ENCODE measurements at regions of chr10 and their contacts with region 1.

Region 1: DNA sequence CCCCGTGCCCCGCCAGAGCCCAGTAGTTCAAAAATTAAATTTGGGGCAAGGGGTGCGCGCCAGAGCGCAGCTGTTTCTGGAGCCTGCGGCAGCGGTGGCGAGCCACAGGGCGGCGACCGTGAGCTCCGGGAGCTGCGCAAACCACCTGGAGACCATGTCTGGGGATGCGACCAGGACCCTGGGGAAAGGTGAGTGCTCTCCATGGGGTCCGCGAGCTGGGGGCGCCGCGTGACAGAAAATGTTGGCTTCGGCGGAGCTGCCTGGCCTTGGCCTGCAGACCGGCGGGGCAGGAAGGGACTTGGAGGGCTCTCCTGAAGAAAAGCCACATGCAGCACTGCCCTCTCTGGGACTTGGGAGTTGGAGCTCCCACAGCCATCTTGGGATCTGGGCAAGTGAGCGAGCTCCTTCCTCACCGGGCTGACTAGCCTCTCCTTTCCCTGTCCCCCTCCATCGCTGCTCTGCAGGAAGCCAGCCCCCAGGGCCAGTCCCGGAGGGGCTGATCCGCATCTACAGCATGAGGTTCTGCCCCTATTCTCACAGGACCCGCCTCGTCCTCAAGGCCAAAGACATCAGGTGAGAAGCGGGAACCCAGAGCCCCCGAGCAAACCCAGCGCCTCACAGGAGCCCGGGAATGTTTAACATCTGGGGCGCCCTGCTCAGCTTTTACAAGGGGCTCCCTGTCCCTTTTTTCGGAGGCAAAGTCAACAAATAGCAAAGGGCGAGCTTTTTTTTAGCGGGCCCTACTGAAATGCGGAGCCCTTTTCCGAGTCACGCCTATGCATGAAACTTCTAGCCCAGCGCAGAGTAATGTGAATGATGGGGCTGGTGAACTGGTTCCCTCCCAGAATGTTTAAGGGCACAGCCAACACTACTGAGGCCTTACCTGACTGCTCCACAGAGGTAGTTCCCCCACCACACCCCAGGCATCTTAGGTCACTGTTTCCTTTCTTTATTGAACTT is 6.1 kb downstream of the GSTO2 start:
- DNase-seq: peak; percentile 62
- H3K4me3 Mint-ChIP-seq: no peak overlapping the region
- H3K27ac Mint-ChIP-seq: no peak overlapping the region
- H3K4me1 Mint-ChIP-seq: peaks cover 6% of the 10 kb centered on the region
- H3K27me3 Mint-ChIP-seq: peaks cover 33% of the 10 kb centered on the region

Region 2: GRCh38 chr10:104067525-104067924 is 207.5 kb before region 1 on chr10:
- CTCF ChIA-PET with region 1: no interaction called
- DNase-seq: no peak
- H3K4me3 Mint-ChIP-seq: no peak overlapping the region
- H3K27ac Mint-ChIP-seq: no peak overlapping the region
- H3K4me1 Mint-ChIP-seq: no peaks in the 10 kb centered on the region
- H3K27me3 Mint-ChIP-seq: peaks cover 30% of the 10 kb centered on the region

Region 3: DNA sequence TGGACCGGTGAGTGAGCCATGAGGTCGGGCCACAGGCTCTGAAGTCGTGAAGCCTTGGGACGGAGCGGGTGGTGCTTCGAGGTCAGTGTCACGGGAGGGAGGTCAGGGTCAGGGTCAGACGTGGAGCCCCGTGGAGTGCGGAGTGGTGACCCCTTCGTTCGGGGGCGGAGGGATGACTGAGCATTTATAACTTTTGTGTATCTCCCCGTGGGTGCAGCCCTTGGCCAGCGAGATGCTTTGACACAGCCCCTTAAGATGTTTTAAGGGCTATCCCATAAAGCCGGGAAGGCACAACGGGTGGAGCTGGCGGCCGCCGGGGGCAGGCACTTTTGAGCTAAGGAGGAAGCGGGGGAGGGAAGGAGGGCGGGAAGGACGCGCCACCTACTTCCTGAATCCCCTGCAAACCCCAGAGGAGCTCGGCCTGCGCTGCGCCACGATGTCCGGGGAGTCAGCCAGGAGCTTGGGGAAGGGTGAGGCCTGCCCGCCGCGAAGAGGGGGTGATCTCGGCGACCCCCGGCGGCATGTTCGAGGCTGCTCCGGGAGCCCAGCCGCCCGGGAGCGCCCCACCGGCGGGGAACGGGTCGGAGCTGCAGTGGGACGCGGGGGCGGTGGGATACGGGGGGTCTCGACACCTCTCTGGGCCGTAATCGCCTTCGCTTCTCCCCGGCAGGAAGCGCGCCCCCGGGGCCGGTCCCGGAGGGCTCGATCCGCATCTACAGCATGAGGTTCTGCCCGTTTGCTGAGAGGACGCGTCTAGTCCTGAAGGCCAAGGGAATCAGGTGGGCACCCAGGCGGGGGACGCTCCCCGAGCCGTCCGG is 20.3 kb before region 1 on chr10 and contains the start of gene GSTO1:
- CTCF ChIA-PET with region 1: interaction called, 17 read pairs
- DNase-seq: peak; percentile 76
- H3K4me3 Mint-ChIP-seq: peak within 1 kb of the TSS; percentile 92
- H3K27ac Mint-ChIP-seq: peak within 1 kb of the TSS; percentile 93
- H3K4me1 Mint-ChIP-seq: peaks cover 52% of the 10 kb centered on the region
- H3K27me3 Mint-ChIP-seq: peaks cover 16% of the 10 kb centered on the region

Region 4: GRCh38 chr10:104291439-104291951 is 16.5 kb after region 1 on chr10:
- CTCF ChIA-PET with region 1: interaction called, 66 read pairs
- DNase-seq: peak; percentile 91
- H3K4me3 Mint-ChIP-seq: no peak overlapping the region
- H3K27ac Mint-ChIP-seq: no peak overlapping the region
- H3K4me1 Mint-ChIP-seq: peaks cover 14% of the 10 kb centered on the region
- H3K27me3 Mint-ChIP-seq: peaks cover 35% of the 10 kb centered on the region

Region 5: DNA sequence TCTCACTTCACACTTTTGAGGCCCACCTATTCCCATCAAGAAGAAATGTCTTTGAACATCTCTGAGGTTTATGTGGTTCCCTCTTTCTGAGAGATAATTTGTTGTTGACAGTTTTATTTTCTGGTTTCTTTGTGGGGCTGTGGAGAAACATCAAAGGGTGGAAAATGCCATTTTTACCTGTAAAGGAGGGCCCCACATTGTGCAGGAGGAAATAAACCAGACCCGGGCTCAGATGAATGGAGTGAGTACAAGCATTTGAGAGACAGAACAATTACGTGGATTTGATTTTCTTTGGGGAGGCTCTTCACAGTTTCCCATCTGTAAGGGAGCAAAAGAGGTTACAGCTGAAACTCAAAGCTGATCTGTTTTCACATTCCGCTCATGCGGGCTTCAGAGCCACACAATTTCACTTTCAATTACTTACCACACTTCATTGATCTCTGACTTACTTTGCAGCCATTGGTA is 33.4 kb after region 1 on chr10:
- CTCF ChIA-PET with region 1: interaction called, 21 read pairs
- DNase-seq: peak; percentile 61
- H3K4me3 Mint-ChIP-seq: peak overlapping the region; percentile 22
- H3K27ac Mint-ChIP-seq: peak overlapping the region; percentile 92
- H3K4me1 Mint-ChIP-seq: peaks cover 80% of the 10 kb centered on the region
- H3K27me3 Mint-ChIP-seq: peaks cover 5% of the 10 kb centered on the region

Region 6: DNA sequence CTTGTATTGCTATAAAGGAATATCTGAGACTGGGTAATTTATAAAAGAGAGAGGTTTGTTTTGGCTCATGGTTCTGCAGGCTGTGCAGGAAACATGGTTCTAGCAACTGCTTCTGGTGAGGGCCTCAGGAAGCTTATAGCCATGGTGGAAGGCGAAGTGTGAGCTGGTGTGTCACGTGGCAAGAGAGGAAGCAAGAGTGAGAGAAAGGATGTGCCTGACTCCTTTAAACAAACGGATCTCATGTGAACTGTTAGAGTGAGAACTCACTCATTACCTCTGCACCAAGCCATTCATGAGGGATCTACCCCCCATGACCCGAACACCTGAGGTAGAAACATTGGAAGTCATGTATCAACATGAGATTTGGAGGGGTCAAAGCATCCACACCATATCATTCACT is 70.9 kb after region 1 on chr10:
- CTCF ChIA-PET with region 1: interaction called, 66 read pairs
- DNase-seq: no peak
- H3K4me3 Mint-ChIP-seq: no peak overlapping the region
- H3K27ac Mint-ChIP-seq: peak overlapping the region; percentile 0
- H3K4me1 Mint-ChIP-seq: peaks cover 19% of the 10 kb centered on the region
- H3K27me3 Mint-ChIP-seq: no peaks in the 10 kb centered on the region

Region 7: GRCh38 chr10:104441329-104442000 is 166.4 kb after region 1 on chr10:
- CTCF ChIA-PET with region 1: no interaction called
- DNase-seq: no peak
- H3K4me3 Mint-ChIP-seq: no peak overlapping the region
- H3K27ac Mint-ChIP-seq: no peak overlapping the region
- H3K4me1 Mint-ChIP-seq: no peaks in the 10 kb centered on the region
- H3K27me3 Mint-ChIP-seq: no peaks in the 10 kb centered on the region

Measured in activated naive CD4-positive, alpha-beta T cell treated with anti-CD3 and anti-CD28 coated beads, Interleukin-2, amount 10 ng/mL, durations not matched to agents 7 days and 5 days (primary cell).